Right cardiac atrium (tissue), 5 donors: ENCODE measurements at regions of chr20 and their contacts with region 1.

Region 1: GRCh38 chr20:43456809-43457639 is 672 bp upstream of the SRSF6 start:
- DNase-seq: peak; percentile 90 to 94 (median 92)
- ATAC-seq: peak; percentile 89 to 90
- H3K4me3 ChIP-seq: peak overlapping the region; percentile 91
- H3K27ac ChIP-seq: peak overlapping the region; percentile 96
- H3K4me1 ChIP-seq: peaks cover 2% of the 10 kb centered on the region
- H3K27me3 ChIP-seq: no peaks in the 10 kb centered on the region

Region 2: DNA sequence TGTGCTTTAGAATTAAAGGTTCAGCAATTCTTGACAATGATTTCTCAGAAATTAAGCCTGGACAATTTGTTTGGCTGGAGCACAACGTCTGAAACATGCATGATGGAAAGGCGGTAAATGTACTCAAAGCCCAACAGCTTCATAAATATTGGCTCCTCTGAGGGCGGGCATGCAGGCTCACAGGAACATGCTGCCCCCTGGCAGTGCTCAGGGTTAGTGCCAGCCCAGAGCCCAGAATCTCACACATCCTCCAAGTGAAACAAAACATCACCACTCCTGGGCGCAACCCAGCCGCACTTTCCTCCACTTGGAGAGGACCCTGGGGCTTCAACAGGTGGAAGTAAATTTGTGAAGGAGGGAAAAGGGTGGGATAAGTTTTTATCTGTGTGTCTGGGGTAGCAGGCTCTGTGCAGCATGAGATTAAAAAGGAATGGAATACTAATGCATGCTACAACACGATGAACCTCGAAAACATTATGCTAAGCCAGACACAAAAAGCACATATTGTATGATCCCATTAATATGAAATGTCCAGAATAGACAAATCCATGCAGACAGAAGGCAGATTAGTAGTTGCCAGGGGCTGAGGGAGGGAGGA is 213.3 kb before region 1 on chr20:
- intact Hi-C with region 1: no loop called
- DNase-seq: no peak
- ATAC-seq: no peak
- H3K4me3 ChIP-seq: no peak overlapping the region
- H3K27ac ChIP-seq: no peak overlapping the region
- H3K4me1 ChIP-seq: no peaks in the 10 kb centered on the region
- H3K27me3 ChIP-seq: no peaks in the 10 kb centered on the region

Region 3: GRCh38 chr20:43590392-43591323 is 133.6 kb after region 1 on chr20 and contains the start of gene IFT52:
- intact Hi-C with region 1: loop called in 1 of 4 experiments (anchors 10 kb)
- DNase-seq: peak; percentile 93 to 97 (median 97)
- ATAC-seq: peak; percentile 100
- H3K4me3 ChIP-seq: peak within 1 kb of the TSS; percentile 86
- H3K27ac ChIP-seq: peak within 1 kb of the TSS; percentile 83
- H3K4me1 ChIP-seq: peaks cover 2% of the 10 kb centered on the region
- H3K27me3 ChIP-seq: no peaks in the 10 kb centered on the region
- total RNA-seq, gene IFT52: 9.6 to 14.1 (median 11.4) TPM